Head of caudate nucleus (tissue), 42 donors: ENCODE measurements at regions of chr11 and their contacts with region 1.

Region 1: GRCh38 chr11:117232092-117232878 is at the start of gene RNF214:
- DNase-seq: peak; percentile 35 to 93 (median 87)

Region 2: DNA sequence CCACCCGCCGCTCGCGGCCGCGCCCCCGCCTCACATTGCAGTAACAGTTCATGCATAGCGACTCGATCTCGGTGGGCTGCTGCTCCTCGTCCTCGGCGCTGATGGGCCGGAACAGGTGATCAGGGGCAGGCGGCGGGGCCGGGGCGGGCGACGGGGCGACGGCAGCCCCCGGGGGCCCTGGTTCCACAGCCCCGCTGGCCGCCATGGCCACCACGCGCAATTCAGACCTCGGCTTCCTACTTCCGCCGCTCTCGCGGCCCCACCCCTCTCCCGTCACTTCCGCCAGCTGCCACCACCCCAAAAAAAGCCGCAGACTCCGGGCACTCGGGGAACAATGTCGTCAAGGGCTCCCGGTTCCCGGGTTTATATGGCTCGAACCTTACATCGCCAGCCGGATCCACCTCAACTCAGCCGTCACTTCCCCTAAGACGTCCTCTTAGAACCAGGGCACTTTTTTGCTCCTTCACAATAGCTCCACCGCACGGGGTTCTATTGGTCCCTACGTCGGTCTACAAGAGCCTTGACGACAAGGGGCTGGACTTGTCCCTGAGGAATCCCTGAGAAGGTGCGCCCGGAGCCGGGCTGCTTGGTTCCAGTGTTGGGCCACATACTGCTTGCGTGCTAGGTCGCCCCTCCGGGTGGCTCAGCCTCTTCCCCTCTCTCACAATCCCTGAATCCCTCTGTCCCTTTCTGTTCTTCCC is 444.3 kb before region 1 on chr11 and contains the start of gene ZPR1:
- intact Hi-C with region 1: loop called (anchors 5 kb)
- DNase-seq: peak; percentile 77 to 95 (median 89)

Region 3: GRCh38 chr11:117316197-117316961 is 84.1 kb after region 1 on chr11 and contains the start of gene BACE1:
- intact Hi-C with region 1: loop called (anchors 2 kb)
- DNase-seq: peak; percentile 79 to 98 (median 93)